Posterior vena cava (tissue), 2 donors: ENCODE measurements at regions of chr7 and their contacts with region 1.

Region 1: DNA sequence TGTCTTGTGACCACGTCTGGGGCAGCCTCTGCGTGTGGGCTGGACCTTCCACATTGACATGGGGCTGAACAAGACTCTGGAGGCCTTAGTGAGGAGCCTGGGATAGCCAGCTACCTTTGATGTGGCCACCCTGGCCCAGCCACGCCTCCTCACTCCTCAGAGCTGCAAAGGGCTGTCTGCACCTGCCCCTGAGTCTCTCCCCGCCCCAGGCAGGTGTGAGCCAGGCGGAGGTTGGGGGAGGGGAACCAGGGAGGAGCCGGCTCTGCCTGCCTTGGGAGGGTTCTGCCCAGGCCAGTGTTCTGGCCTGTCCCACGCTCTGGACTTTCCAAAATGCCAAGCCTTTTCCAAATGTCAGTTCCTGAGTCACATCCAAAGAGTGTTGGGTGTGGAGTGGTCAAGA is 72.2 kb downstream of the GTF2IRD1 start:
- DNase-seq: no peak

Region 2: GRCh38 chr7:74217455-74218342 is 308.2 kb before region 1 on chr7:
- intact Hi-C with region 1: loop called in 1 of 2 experiments (anchors 10 kb)
- DNase-seq: no peak